ENCODE measurements at regions of chr3 and their contacts with region 1.

Region 1: GRCh38 chr3:147851062-147851461 is 441.9 kb downstream of the ZIC1 start:
- DNase-seq: no peak
- ATAC-seq: no peak
- H3K4me3 ChIP-seq: no peak overlapping the region
- H3K27ac ChIP-seq: no peak overlapping the region
- H3K4me1 ChIP-seq: no peaks in the 10 kb centered on the region
- H3K27me3 ChIP-seq: no peaks in the 10 kb centered on the region
- CTCF ChIP-seq: no peak
- POLR2A ChIP-seq: no peak
- RAD21 ChIP-seq: no peak

Region 2: GRCh38 chr3:147318900-147319299 is 532.2 kb before region 1 on chr3:
- CTCF ChIA-PET with region 1: no interaction called
- POLR2A ChIA-PET with region 1: no interaction called
- dilution Hi-C with region 1: no loop called
- in situ Hi-C with region 1: no loop called
- intact Hi-C with region 1: no loop called
- DNase-seq: no peak
- ATAC-seq: no peak
- H3K4me3 ChIP-seq: no peak overlapping the region
- H3K27ac ChIP-seq: no peak overlapping the region
- H3K4me1 ChIP-seq: no peaks in the 10 kb centered on the region
- H3K27me3 ChIP-seq: no peaks in the 10 kb centered on the region
- CTCF ChIP-seq: no peak
- POLR2A ChIP-seq: no peak
- RAD21 ChIP-seq: no peak

Region 3: DNA sequence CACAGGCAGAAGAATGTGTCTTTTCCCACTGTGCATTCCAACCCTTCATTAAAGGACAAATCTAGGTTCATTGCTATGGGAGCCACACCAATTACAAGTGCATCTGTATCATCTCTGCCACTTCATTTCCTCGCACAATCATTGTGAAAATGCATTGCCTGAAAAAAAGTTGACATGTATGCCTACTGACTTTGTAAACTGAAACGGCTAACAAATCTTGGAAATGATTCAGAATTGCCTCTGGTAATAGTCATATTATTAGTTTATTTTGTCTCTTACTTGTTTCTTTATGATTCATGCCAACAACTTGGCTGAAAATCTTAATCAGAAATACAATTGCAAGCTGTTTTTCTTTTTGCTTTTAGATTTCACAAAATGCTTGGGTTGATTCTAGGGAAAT is 55.2 kb after region 1 on chr3:
- CTCF ChIA-PET with region 1: no interaction called
- POLR2A ChIA-PET with region 1: no interaction called
- dilution Hi-C with region 1: no loop called
- in situ Hi-C with region 1: no loop called
- intact Hi-C with region 1: loop called (anchors 5 kb)
- DNase-seq: peak; percentile 39
- ATAC-seq: no peak
- H3K4me3 ChIP-seq: no peak overlapping the region
- H3K27ac ChIP-seq: no peak overlapping the region
- H3K4me1 ChIP-seq: no peaks in the 10 kb centered on the region
- H3K27me3 ChIP-seq: no peaks in the 10 kb centered on the region
- CTCF ChIP-seq: no peak
- POLR2A ChIP-seq: no peak
- RAD21 ChIP-seq: no peak